Activated B cell treated with CpG ODN at 0.5 μM for 24 hours (primary cell): ENCODE measurements at regions of chr18 and their contacts with region 1.

Region 1: DNA sequence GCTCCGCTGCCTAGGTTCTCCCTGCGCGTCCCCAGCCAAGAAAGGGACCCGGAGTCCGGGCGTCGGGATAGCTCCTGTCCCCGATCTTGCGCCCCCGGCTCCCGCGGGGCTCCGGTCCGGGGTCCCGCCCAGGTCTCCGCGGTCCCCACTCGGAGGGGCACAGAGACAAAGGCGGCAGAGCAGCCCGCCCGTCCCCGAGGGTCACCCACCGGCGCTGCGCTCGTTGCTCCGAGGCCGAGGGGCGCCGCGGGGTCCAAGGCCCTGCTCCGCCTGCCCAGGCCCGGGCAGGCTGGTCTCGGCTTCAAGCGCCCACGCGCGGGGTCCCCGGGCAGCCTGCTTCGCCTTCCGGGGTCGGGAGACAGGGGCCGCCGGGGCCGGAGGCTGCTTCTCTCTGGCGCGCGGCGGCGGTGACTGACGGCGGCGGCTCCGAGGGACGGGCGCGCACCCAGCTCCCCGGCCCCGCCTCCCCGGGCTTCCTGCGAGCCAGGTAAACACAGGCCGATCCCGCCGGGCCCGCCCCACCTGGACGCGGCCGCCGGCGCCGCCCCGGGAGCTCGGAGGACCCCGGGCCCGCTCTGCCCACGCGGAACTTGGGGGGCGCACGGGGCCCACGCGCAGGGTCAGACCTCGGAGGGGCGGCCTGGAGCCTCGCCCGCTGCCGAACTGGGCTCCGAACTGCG is at the start of gene MBP:
- DNase-seq: peak; percentile 72
- ATAC-seq: peak; percentile 42
- H3K4me3 Mint-ChIP-seq: peak within 1 kb of the TSS; percentile 95
- H3K27ac Mint-ChIP-seq: peak within 1 kb of the TSS; percentile 91
- H3K4me1 Mint-ChIP-seq: peaks cover 56% of the 10 kb centered on the region
- H3K27me3 Mint-ChIP-seq: no peaks in the 10 kb centered on the region
- CTCF ChIP-seq: no peak
- total RNA-seq, gene MBP: 88.0 and 92.7 TPM in 2 replicates

Region 2: GRCh38 chr18:76492669-76493212 is 639.8 kb before region 1 on chr18:
- CTCF ChIA-PET with region 1: no interaction called
- POLR2A ChIA-PET with region 1: no interaction called
- intact Hi-C with region 1: loop called (anchors 2 kb)
- DNase-seq: peak; percentile 98
- ATAC-seq: peak; percentile 73
- H3K4me3 Mint-ChIP-seq: peak overlapping the region; percentile 91
- H3K27ac Mint-ChIP-seq: peak overlapping the region; percentile 88
- H3K4me1 Mint-ChIP-seq: peaks cover 36% of the 10 kb centered on the region
- H3K27me3 Mint-ChIP-seq: peaks cover 16% of the 10 kb centered on the region
- CTCF ChIP-seq: no peak

Region 3: GRCh38 chr18:76914314-76914713 is 218.2 kb before region 1 on chr18:
- CTCF ChIA-PET with region 1: no interaction called
- POLR2A ChIA-PET with region 1: no interaction called
- intact Hi-C with region 1: no loop called
- DNase-seq: no peak
- ATAC-seq: no peak
- H3K4me3 Mint-ChIP-seq: no peak overlapping the region
- H3K27ac Mint-ChIP-seq: no peak overlapping the region
- H3K4me1 Mint-ChIP-seq: peaks cover 12% of the 10 kb centered on the region
- H3K27me3 Mint-ChIP-seq: no peaks in the 10 kb centered on the region
- CTCF ChIP-seq: no peak

Region 4: GRCh38 chr18:77061946-77062517 is 70.5 kb before region 1 on chr18:
- CTCF ChIA-PET with region 1: interaction called, 12 read pairs
- POLR2A ChIA-PET with region 1: interaction called, 131 read pairs
- intact Hi-C with region 1: loop called (anchors 1 kb)
- DNase-seq: no peak
- ATAC-seq: peak; percentile 30
- H3K4me3 Mint-ChIP-seq: peak overlapping the region; percentile 55
- H3K27ac Mint-ChIP-seq: peak overlapping the region; percentile 94
- H3K4me1 Mint-ChIP-seq: peaks cover 83% of the 10 kb centered on the region
- H3K27me3 Mint-ChIP-seq: no peaks in the 10 kb centered on the region
- CTCF ChIP-seq: no peak

Region 5: GRCh38 chr18:77101410-77102258 is 30.9 kb before region 1 on chr18:
- CTCF ChIA-PET with region 1: interaction called, 3 read pairs
- POLR2A ChIA-PET with region 1: interaction called, 70 read pairs
- intact Hi-C with region 1: loop called (anchors 1 kb)
- DNase-seq: no peak
- ATAC-seq: peak; percentile 68
- H3K4me3 Mint-ChIP-seq: peak overlapping the region; percentile 79
- H3K27ac Mint-ChIP-seq: peak overlapping the region; percentile 95
- H3K4me1 Mint-ChIP-seq: peaks cover 92% of the 10 kb centered on the region
- H3K27me3 Mint-ChIP-seq: no peaks in the 10 kb centered on the region
- CTCF ChIP-seq: no peak

Region 6: DNA sequence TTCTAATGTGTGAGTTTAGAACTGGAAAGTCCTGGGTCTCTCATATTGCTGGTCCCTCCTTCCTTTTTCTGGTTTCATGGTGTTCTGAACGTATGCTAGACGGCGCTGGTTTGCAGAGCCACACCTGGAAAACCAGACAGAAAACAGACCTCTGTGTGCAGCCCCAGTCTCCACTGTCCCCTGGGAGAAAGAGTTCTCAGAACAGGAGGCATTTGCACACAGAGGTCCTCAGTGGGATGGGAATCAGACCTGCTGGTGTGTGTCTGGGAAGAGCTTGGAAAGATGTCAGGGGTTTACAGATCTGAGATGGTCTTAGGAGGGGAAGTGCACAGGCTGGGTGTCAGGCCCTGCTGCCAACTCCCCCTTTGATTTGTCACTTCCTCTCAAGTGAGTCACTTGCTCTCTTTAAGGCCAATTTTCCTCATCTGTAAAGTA is 14.9 kb after region 1 on chr18:
- CTCF ChIA-PET with region 1: no interaction called
- POLR2A ChIA-PET with region 1: interaction called, 45 read pairs
- intact Hi-C with region 1: loop called (anchors 1 kb)
- DNase-seq: peak; percentile 37
- ATAC-seq: peak; percentile 76
- H3K4me3 Mint-ChIP-seq: peak overlapping the region; percentile 66
- H3K27ac Mint-ChIP-seq: peak overlapping the region; percentile 96
- H3K4me1 Mint-ChIP-seq: peaks cover 46% of the 10 kb centered on the region
- H3K27me3 Mint-ChIP-seq: no peaks in the 10 kb centered on the region
- CTCF ChIP-seq: no peak